ENCODE measurements at regions of chr9 and their contacts with region 1.

Region 1: GRCh38 chr9:135085830-135086546 is 1.5 kb upstream of the OLFM1 start:
- DNase-seq: peak; percentile 78 to 90 (median 88)
- H3K4me3 ChIP-seq: peak overlapping the region; percentile 25
- H3K27ac ChIP-seq: no peak overlapping the region
- H3K4me1 ChIP-seq: peaks cover 6% of the 10 kb centered on the region
- H3K27me3 ChIP-seq: no peaks in the 10 kb centered on the region
- CTCF ChIP-seq: peak; percentile 80 to 94 (median 93)
- EP300 ChIP-seq: no peak
- POLR2A ChIP-seq: no peak

Region 2: GRCh38 chr9:134698587-134699342 is 387.2 kb before region 1 on chr9:
- intact Hi-C with region 1: loop called in 1 of 4 experiments (anchors 10 kb)
- DNase-seq: peak; percentile 66 to 84 (median 81)
- H3K4me3 ChIP-seq: no peak overlapping the region
- H3K27ac ChIP-seq: no peak overlapping the region
- H3K4me1 ChIP-seq: peaks cover 2% of the 10 kb centered on the region
- H3K27me3 ChIP-seq: no peaks in the 10 kb centered on the region
- CTCF ChIP-seq: peak; percentile 72 to 95 (median 92)
- EP300 ChIP-seq: no peak
- POLR2A ChIP-seq: no peak

Region 3: GRCh38 chr9:134891053-134891452 is 194.9 kb before region 1 on chr9:
- intact Hi-C with region 1: no loop called
- DNase-seq: peak in 1 of 5 donors; percentile 8
- H3K4me3 ChIP-seq: no peak overlapping the region
- H3K27ac ChIP-seq: no peak overlapping the region
- H3K4me1 ChIP-seq: peaks cover 13% of the 10 kb centered on the region
- H3K27me3 ChIP-seq: no peaks in the 10 kb centered on the region
- CTCF ChIP-seq: no peak
- EP300 ChIP-seq: no peak
- POLR2A ChIP-seq: no peak

Region 4: DNA sequence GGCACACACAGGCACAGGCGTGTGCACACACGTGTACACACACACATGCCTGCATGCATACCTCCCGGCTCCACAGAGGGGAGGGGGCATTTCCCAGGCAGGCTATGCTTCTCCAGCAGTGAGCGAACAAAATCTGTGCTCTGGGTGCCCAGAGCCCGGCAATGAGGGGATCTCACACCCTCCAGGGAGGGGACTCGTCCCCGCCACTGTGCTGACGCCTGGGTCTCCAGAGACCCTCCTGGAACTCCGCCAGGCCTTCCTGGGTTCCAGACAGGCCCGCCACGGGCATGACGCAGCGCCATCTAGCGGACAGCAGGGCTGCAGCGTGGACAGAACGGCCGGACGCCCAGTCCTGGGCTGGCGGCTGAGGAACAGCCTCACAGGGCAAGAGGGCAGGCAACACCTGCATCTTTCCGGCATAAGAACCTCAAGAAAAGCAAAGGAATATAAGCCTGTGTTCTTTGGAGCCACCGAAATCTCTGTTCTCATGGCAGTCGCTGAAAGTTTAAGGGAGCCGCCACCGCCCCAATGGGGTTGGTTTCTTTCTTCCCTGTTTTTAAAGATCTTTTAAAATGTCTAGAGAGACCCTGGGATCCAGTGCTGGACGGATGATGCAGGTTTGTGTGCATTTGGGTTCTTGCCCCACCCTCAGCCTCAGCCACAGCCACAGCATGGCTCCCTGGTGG is 258.0 kb after region 1 on chr9:
- intact Hi-C with region 1: loop called (anchors 5 kb)
- DNase-seq: peak; percentile 52 to 80 (median 72)
- H3K4me3 ChIP-seq: no peak overlapping the region
- H3K27ac ChIP-seq: no peak overlapping the region
- H3K4me1 ChIP-seq: peaks cover 9% of the 10 kb centered on the region
- H3K27me3 ChIP-seq: no peaks in the 10 kb centered on the region
- CTCF ChIP-seq: peak; percentile 60 to 67 (median 60)
- EP300 ChIP-seq: no peak
- POLR2A ChIP-seq: no peak

Region 5: DNA sequence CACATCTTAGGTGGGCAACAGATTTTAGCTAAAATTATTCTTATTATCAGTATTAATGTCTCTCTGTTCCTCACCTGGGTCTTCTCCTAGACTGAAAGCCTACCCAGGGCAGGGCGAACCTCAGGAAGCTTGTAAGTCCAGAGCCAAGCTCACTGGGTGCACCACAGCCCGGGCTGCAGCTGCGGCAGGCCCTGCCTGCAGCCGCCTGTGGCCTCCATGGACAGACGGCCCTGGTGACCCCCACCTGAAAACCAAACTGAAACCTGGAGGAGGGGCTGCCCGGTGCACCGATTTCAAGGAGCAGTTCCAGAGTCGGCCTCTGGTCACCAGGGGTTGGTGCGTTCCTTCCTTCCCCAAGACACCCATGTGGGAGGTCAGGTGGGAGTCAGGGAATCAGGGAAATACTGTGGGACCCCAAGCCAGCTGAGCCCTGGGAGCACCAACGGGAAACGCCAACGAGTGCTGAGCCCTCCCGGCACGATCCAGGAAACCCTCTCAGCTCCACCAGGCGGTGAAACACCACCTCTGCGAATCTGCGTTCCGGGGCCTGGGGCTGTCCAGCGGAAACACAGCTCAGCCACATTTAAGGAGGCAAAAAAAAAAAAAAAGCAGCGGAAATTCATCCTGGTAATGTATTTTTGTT is 325.0 kb after region 1 on chr9:
- intact Hi-C with region 1: loop called (anchors 5 kb)
- DNase-seq: no peak
- H3K4me3 ChIP-seq: no peak overlapping the region
- H3K27ac ChIP-seq: no peak overlapping the region
- H3K4me1 ChIP-seq: no peaks in the 10 kb centered on the region
- H3K27me3 ChIP-seq: no peaks in the 10 kb centered on the region
- CTCF ChIP-seq: no peak
- EP300 ChIP-seq: no peak
- POLR2A ChIP-seq: no peak

Measured in ovary (tissue), 10 donors.